Caco-2 (cell line): ENCODE measurements at regions of chr10 and their contacts with region 1.

Region 1: GRCh38 chr10:96606946-96607345 is 20.1 kb upstream of the TM9SF3 start:
- DNase-seq: no peak
- H3K4me3 ChIP-seq: no peak overlapping the region
- H3K4me3 Mint-ChIP-seq: no peak overlapping the region
- H3K27ac Mint-ChIP-seq: peak overlapping the region; percentile 93
- H3K4me1 ChIP-seq: peaks cover 46% of the 10 kb centered on the region
- H3K4me1 Mint-ChIP-seq: peaks cover 39% of the 10 kb centered on the region
- H3K27me3 ChIP-seq: no peaks in the 10 kb centered on the region
- H3K27me3 Mint-ChIP-seq: no peaks in the 10 kb centered on the region
- CTCF ChIP-seq: no peak

Region 2: DNA sequence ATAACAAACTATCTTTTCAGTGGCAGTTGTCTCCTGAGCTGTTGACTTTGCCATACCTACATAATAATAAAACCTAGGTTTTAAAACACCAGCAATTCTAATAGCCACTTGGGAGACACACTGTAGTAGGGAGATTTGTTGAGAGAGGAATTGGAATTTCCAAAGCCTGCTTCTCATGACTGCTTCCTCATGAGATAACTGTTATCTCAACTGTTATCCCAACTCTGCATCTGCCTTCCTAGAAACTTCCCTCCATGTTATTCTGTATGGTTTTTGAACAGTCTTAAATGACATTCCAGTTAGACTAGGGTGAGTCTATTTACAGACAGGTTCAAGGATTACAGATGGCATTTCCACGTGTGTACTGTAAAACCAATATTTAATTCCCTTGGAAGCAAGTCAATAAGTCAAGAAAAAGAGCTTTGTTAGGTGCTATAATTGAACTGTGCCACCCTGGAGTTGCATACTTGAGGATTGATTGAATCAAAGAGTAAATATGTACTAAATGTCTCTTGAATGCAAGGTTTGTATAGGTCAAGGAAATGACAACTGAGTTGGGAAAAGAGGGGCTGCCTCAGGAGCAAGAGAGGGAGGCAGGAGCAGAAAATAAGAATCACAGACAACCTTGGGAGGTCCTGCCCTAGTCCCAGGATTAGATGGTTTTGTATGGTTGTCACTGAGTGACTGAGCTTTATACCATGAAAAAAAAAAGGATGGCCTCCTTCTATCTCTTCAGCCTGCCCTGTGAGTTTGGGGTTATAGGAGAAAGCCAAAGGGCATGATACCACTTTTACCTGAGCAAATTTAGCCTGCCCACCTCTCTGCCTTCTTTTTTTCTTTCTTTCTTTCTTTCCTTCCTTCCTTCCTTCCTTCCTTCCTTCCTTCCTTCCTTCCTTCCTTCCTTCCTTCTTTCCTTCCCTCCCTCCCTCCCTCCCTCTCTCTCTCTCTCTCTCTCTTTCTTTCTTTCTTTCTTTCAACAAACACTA is 10.2 kb before region 1 on chr10:
- CTCF ChIA-PET with region 1: no interaction called
- POLR2A ChIA-PET with region 1: no interaction called
- intact Hi-C with region 1: loop called (anchors 1 kb)
- DNase-seq: peak in 1 of 2 experiments; percentile 21
- H3K4me3 ChIP-seq: no peak overlapping the region
- H3K4me3 Mint-ChIP-seq: no peak overlapping the region
- H3K27ac Mint-ChIP-seq: peak overlapping the region; percentile 30
- H3K4me1 ChIP-seq: peaks cover 19% of the 10 kb centered on the region
- H3K4me1 Mint-ChIP-seq: peaks cover 20% of the 10 kb centered on the region
- H3K27me3 ChIP-seq: no peaks in the 10 kb centered on the region
- H3K27me3 Mint-ChIP-seq: no peaks in the 10 kb centered on the region
- CTCF ChIP-seq: no peak